Esophagus muscularis mucosa (tissue), 4 donors: ENCODE measurements at regions of chr14 and their contacts with region 1.

Region 1: GRCh38 chr14:23478111-23478759 is 8.7 kb downstream of the NGDN start:
- DNase-seq: peak; percentile 92
- H3K4me3 ChIP-seq: no peak overlapping the region
- H3K27ac ChIP-seq: no peak overlapping the region
- H3K4me1 ChIP-seq: no peaks in the 10 kb centered on the region
- H3K27me3 ChIP-seq: no peaks in the 10 kb centered on the region
- CTCF ChIP-seq: peak; percentile 53 to 66 (median 65)
- EP300 ChIP-seq: no peak
- POLR2A ChIP-seq: no peak

Region 2: DNA sequence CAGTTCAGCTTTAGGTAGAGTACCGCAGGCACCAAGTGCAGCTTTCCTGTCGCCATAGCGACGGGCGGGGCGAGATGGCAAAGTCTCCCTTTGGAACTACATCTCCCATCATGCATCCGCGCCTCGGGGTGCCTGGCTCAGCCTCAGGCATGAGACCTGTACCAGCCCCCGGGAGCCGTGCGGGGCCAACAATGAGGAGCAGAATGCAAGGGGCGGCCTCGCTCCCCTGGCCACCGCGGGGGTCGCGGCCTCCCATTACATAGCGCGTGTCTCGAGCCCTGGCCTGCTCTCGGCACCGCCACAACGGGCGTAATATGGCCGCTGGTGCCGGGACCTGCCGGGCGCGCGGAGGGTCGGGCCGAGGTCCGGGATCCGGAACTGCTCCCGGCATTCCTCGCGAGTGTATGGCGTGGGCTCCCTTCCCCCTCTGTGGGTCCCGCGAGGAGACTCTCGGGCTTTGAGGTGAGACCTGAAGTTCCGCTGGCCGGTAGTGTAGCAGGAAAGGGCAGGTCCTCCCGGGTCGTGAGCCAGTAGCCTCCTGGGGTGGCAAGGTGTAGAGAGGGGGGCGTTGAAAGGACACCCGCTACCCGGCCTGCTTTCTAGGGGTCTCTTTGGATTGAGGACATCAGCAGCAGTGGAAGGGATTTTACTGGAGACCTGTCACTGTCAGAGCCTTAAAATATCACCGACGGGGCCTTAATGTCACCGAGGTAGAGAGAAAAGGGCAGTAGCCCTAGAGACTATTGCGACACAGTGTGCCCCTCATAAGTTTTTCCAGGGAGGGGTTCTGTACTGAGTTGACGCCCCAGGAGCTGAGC is 77.9 kb after region 1 on chr14 and contains the start of gene THTPA:
- intact Hi-C with region 1: loop called (anchors 2 kb)
- DNase-seq: peak; percentile 98
- H3K4me3 ChIP-seq: peak within 1 kb of the TSS; percentile 73 to 92 (median 90)
- H3K27ac ChIP-seq: peak within 1 kb of the TSS; percentile 93 to 98 (median 96)
- H3K4me1 ChIP-seq: peaks cover 22 to 41% (median 38%) of the 10 kb centered on the region in 4 donors
- H3K27me3 ChIP-seq: no peaks in the 10 kb centered on the region
- CTCF ChIP-seq: no peak
- EP300 ChIP-seq: no peak
- POLR2A ChIP-seq: peak; percentile 8
- total RNA-seq, gene THTPA: 18.3 to 20.0 (median 19.7) TPM